ENCODE measurements at regions of chr17 and their contacts with region 1.

Region 1: DNA sequence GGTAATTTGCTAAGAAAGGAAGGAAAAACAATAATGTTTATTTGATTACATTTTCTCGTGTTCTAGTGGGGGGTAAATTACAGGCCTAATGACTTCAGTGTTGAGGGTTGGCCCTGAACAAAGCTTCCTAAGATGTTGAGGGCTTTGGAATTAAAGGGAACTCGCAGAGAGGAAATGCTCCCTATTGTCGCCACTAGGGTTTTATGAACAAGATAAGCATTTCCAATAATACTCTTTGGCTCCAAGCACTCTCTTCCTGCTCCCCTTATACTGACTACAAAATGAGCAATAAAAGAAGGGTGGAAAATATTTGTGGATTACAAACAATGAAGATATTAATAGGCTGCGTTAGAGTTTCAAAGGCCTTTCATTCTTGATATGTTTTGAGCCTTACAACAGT is 363.6 kb downstream of the HS3ST3B1 start:
- DNase-seq: no peak
- ATAC-seq: no peak
- H3K4me3 ChIP-seq: no peak overlapping the region
- H3K27ac ChIP-seq: no peak overlapping the region
- H3K4me1 ChIP-seq: no peaks in the 10 kb centered on the region
- H3K27me3 ChIP-seq: peaks cover 0 to 4% (median 0%) of the 10 kb centered on the region in 9 donors
- CTCF ChIP-seq: peak in 1 of 12 donors; percentile 11
- POLR2A ChIP-seq: no peak

Region 2: DNA sequence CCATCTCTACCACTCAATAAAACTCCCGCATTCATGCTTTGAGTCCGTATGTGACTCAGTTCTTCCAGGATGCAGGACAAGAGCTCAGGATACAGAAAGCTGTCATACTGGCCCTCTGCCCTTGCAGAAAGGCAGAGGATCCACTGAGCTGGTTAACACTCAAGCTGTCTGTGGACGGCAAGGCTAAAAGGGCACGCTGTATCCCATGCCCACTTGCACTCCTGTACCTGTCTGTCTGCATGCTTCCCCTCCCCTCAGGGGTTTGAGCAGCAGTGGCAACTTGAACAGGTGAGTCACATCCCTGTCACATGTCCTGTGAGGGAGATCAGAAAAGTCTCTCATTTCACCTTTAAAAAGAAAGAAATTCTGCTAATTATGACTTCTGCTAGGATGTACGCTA is 69.8 kb before region 1 on chr17:
- intact Hi-C with region 1: loop called in 1 of 10 experiments (anchors 10 kb)
- DNase-seq: no peak
- ATAC-seq: no peak
- H3K4me3 ChIP-seq: no peak overlapping the region
- H3K27ac ChIP-seq: no peak overlapping the region
- H3K4me1 ChIP-seq: no peaks in the 10 kb centered on the region
- H3K27me3 ChIP-seq: peaks cover 0 to 25% (median 0%) of the 10 kb centered on the region in 9 donors
- CTCF ChIP-seq: no peak
- POLR2A ChIP-seq: no peak

Region 3: GRCh38 chr17:14719942-14720341 is 55.4 kb after region 1 on chr17:
- intact Hi-C with region 1: loop called in 1 of 10 experiments (anchors 10 kb)
- DNase-seq: no peak
- ATAC-seq: no peak
- H3K4me3 ChIP-seq: no peak overlapping the region
- H3K27ac ChIP-seq: no peak overlapping the region
- H3K4me1 ChIP-seq: no peaks in the 10 kb centered on the region
- H3K27me3 ChIP-seq: peaks cover 0 to 5% (median 0%) of the 10 kb centered on the region in 9 donors
- CTCF ChIP-seq: no peak
- POLR2A ChIP-seq: no peak